ENCODE measurements at regions of chr2 and their contacts with region 1.

Region 1: GRCh38 chr2:233976690-233977294 is 59.6 kb downstream of the TRPM8 start:
- DNase-seq: no peak
- ATAC-seq: no peak
- H3K4me3 ChIP-seq: no peak overlapping the region
- H3K27ac ChIP-seq: no peak overlapping the region
- H3K4me1 ChIP-seq: peaks cover 0 to 8% (median 0%) of the 10 kb centered on the region in 12 donors
- H3K27me3 ChIP-seq: peaks cover 0 to 53% (median 0%) of the 10 kb centered on the region in 9 donors
- CTCF ChIP-seq: peak in 5 of 12 donors; percentile 17 to 43 (median 20)
- POLR2A ChIP-seq: no peak

Region 2: GRCh38 chr2:233846387-233847247 is 130.2 kb before region 1 on chr2:
- intact Hi-C with region 1: no loop called
- DNase-seq: no peak
- ATAC-seq: peak in 1 of 4 donors; percentile 38
- H3K4me3 ChIP-seq: no peak overlapping the region
- H3K27ac ChIP-seq: no peak overlapping the region
- H3K4me1 ChIP-seq: no peaks in the 10 kb centered on the region
- H3K27me3 ChIP-seq: no peaks in the 10 kb centered on the region
- CTCF ChIP-seq: no peak
- POLR2A ChIP-seq: no peak

Region 3: DNA sequence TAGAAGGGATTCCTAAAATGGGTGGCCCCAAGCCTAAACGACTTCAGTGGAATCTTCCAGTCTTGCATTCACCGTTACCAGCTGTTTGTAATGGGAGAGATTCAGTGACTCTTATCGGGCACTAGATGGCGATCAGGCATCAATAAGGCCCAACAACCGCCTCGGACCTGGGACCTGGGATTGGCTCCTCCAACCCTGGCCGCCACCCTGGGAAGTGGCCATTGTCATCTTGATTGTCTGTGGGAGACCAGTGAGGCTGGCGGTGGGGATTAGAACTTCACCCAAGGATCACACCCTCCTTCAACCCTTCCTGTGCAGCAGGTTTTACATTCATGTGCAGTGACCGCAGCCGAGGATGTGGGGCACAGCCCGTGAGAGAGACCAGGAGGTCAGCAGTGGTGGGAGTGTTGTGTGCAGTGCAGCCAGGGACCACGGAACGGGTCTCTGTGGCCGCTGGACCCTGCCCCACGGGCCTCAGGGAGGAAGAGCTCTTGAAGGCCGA is 159.0 kb after region 1 on chr2:
- intact Hi-C with region 1: no loop called
- DNase-seq: peak; percentile 22 to 67 (median 35)
- ATAC-seq: peak; percentile 47 to 83 (median 70)
- H3K4me3 ChIP-seq: no peak overlapping the region
- H3K27ac ChIP-seq: no peak overlapping the region
- H3K4me1 ChIP-seq: no peaks in the 10 kb centered on the region
- H3K27me3 ChIP-seq: peaks cover 0 to 26% (median 4%) of the 10 kb centered on the region in 9 donors
- CTCF ChIP-seq: peak; percentile 54 to 82 (median 71)
- POLR2A ChIP-seq: no peak

Region 4: GRCh38 chr2:234533626-234534025 is 556.8 kb after region 1 on chr2:
- intact Hi-C with region 1: loop called in 1 of 10 experiments (anchors 10 kb)
- DNase-seq: no peak
- ATAC-seq: no peak
- H3K4me3 ChIP-seq: no peak overlapping the region
- H3K27ac ChIP-seq: no peak overlapping the region
- H3K4me1 ChIP-seq: no peaks in the 10 kb centered on the region
- H3K27me3 ChIP-seq: peaks cover 0 to 33% (median 0%) of the 10 kb centered on the region in 9 donors
- CTCF ChIP-seq: no peak
- POLR2A ChIP-seq: no peak

Region 5: DNA sequence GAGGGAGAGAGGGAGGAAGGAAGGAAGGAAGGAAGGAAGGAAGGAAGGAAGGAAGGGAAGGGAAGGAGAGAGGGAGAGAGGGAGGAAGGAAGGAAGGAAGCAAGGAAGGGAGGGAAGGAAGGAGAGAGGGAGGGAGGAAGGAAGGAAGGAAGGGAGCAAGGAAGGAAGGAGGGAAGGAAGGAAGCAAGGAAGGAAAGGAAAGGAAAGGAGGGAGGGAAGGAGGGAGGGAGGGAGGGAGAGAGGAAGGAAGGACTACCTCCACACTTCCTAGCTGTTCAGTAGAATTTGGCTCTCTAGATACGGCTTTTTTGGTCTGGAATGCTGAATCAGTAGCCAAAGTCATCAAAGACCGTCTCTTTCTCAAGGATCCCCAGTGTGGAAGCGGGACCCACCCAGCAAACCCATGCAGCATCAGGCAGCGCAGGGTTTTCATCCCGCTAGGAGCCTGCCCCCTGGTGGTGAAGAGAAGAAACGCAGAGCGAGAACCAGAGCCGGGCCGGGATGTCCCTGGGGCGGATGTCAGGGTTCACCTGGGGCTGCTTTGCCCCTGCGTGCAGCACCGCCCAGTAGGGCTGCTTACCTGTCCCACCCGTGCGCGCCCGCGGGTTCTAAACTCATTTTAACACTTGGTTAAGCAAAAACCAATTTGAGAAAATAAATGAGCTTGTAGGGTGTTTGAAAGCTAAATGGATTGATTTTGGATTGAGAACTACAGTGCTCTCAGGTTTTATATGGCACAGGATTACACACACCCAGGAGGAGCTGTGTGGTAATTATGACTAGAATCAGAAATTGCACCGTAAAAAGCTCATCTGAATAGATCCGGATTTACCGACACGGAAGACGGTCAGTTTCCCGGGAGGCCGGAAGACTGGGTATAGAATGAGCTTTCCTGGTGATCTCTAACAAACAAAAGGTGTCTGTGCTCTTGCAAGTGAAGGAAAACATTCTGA is 568.1 kb after region 1 on chr2:
- intact Hi-C with region 1: loop called in 5 of 10 experiments (anchors 5 to 10 kb)
- DNase-seq: peak; percentile 49 to 84 (median 54)
- ATAC-seq: peak; percentile 51 to 72 (median 62)
- H3K4me3 ChIP-seq: no peak overlapping the region
- H3K27ac ChIP-seq: no peak overlapping the region
- H3K4me1 ChIP-seq: peaks cover 0 to 6% (median 0%) of the 10 kb centered on the region in 12 donors
- H3K27me3 ChIP-seq: peaks cover 0 to 16% (median 0%) of the 10 kb centered on the region in 9 donors
- CTCF ChIP-seq: peak; percentile 79 to 96 (median 92)
- POLR2A ChIP-seq: no peak

Region 6: GRCh38 chr2:235116885-235117492 is 1140.2 kb after region 1 on chr2:
- intact Hi-C with region 1: loop called in 1 of 10 experiments (anchors 10 kb)
- DNase-seq: no peak
- ATAC-seq: no peak
- H3K4me3 ChIP-seq: no peak overlapping the region
- H3K27ac ChIP-seq: no peak overlapping the region
- H3K4me1 ChIP-seq: no peaks in the 10 kb centered on the region
- H3K27me3 ChIP-seq: peaks cover 0 to 10% (median 0%) of the 10 kb centered on the region in 9 donors
- CTCF ChIP-seq: peak; percentile 64 to 83 (median 71)
- POLR2A ChIP-seq: no peak

Measured in heart left ventricle (tissue), 16 donors.